HEK293T (cell line): ENCODE measurements at regions of chr4 and their contacts with region 1.

Region 1: GRCh38 chr4:174217273-174218126 is 66.0 kb downstream of the FBXO8 start:
- DNase-seq: peak; percentile 36

Region 2: DNA sequence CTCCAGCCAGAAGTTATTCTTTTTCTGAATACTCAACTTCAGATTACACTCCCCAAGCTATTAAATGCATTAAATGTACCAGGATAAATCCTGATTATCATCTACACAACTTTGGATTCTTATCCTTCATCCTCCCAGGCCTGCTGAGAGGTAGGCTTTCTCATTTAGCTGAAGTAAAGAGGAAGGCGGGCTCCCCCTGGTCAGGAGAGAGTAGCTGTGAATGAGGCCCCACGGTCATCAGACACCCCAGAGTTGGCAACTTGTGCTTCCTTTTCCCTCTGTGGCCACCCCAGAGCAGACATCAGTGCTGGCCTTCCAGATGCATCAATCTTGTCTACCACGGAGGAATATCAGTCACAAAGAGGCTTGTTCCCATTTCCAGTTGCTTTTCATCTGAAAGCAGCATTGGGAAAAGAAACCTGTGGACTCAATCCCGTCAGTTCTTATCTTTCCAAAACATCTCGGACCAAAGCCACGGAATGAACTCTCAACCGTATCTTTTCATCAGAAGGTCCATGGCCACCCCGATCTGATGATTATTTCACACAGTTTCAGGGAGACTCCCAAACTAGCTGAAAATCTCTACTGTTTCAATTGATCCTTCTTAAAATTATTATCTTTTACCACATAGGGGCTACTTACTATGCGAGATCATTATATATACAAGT is 13.2 kb before region 1 on chr4:
- CTCF ChIA-PET with region 1: interaction called, 3 read pairs
- POLR2A ChIA-PET with region 1: interaction called, 14 read pairs
- DNase-seq: no peak

Region 3: GRCh38 chr4:174282836-174283506 is 65.5 kb after region 1 on chr4:
- CTCF ChIA-PET with region 1: no interaction called
- POLR2A ChIA-PET with region 1: interaction called, 25 read pairs
- DNase-seq: peak; percentile 81